Activated naive CD4-positive, alpha-beta T cell treated with anti-CD3 and anti-CD28 coated beads for 36 hours (primary cell): ENCODE measurements at regions of chr3 and their contacts with region 1.

Region 1: DNA sequence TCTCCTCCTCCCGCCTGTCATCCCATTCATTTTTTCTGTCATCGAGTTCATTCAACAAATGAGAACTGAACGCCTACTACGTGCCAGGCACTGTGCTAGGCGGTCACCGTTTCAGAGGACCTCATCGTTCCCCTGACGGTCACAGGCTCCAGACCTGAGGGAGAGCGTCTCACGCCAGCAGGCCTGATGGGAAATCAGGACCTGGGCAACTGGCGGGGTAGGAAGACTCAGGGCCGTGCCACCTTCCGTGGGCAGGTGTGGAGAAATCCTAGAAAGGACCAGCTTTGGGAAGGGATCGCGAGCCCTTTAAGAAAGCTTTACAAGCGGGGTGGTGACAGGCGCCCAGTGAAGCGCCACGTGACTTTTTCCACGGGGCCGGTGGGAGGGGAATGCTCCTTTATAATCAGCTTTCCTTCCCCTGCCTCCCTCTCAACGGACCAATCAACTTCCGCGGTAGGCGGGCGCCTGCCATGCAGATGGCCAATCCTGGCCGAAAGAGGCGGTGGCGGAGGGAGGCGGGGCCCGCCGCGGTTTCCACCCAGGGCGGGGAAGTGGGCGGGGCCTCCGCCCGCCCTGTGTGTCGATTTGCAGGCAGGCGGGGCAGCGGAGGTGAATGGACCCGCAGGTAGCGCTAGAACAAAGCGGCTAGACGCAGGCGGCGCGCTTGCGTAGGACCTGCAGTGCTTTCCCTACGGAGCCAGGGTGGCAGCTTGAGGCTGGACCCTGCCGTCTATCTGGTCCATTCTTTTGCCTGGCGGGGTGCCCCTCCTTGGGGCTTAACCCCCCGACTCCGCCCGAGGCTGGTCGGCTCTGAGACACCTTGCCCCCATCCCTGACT is 816 bp upstream of the DUSP7 start:
- DNase-seq: peak; percentile 100
- H3K4me3 Mint-ChIP-seq: peak overlapping the region; percentile 78
- H3K27ac Mint-ChIP-seq: peak overlapping the region; percentile 76
- H3K4me1 Mint-ChIP-seq: peaks cover 25% of the 10 kb centered on the region
- H3K27me3 Mint-ChIP-seq: no peaks in the 10 kb centered on the region

Region 2: GRCh38 chr3:51384726-51385473 is 672.3 kb before region 1 on chr3 and contains the start of gene MANF:
- CTCF ChIA-PET with region 1: no interaction called
- intact Hi-C with region 1: loop called (anchors 2 kb)
- DNase-seq: peak; percentile 99
- H3K4me3 Mint-ChIP-seq: peak within 1 kb of the TSS; percentile 97
- H3K27ac Mint-ChIP-seq: peak within 1 kb of the TSS; percentile 98
- H3K4me1 Mint-ChIP-seq: peaks cover 47% of the 10 kb centered on the region
- H3K27me3 Mint-ChIP-seq: no peaks in the 10 kb centered on the region
- total RNA-seq, gene MANF: 91.7 to 108 TPM

Region 3: DNA sequence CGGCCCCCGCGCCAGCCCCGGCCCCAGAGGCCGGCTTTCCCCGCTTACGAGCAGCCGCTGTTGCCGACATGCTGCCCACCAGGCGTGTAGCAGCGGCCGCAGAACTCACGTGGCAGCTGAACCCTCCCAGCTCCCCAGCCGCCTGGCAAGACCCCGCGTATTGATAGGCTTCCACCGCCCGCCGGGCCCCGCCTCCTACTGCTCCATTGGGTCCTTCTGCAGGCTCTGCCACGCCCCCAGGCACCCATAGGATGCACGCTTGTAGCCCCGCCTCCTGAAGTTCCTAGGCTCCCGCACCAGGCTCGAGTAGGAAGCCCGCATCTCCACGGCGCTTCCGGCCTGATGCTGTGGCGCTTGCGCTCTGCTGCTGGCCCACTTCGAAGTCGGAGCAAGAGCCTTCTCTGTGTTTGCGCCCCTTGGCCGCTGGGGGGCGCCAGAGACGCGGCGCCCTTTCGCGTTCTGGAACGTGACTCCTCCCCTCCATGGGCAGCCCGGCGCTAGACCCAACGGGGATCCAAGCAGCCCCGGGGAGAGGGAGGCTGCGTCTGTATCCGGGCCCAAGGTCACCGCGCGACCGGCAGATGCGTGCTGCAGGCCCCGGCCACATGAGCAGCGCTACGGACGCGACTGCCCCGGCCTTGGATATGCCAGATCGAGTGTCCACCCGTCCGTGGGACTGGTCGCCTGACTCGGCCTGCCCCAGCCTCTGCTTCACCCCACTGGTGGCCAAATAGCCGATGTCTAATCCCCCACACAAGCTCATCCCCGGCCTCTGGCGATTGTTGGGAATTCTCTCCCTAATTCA is 115.2 kb before region 1 on chr3 and contains the starts of genes PARP3 and RRP9:
- CTCF ChIA-PET with region 1: interaction called, 6 read pairs
- intact Hi-C with region 1: loop called (anchors 1 kb)
- DNase-seq: peak; percentile 100
- H3K4me3 Mint-ChIP-seq: peak within 1 kb of the TSS; percentile 88
- H3K27ac Mint-ChIP-seq: peak within 1 kb of the TSS; percentile 82
- H3K4me1 Mint-ChIP-seq: peaks cover 33% of the 10 kb centered on the region
- H3K27me3 Mint-ChIP-seq: no peaks in the 10 kb centered on the region
- total RNA-seq, gene PARP3: 10.0 to 11.1 TPM
- total RNA-seq, gene RRP9: 24.6 to 25.0 TPM

Region 4: DNA sequence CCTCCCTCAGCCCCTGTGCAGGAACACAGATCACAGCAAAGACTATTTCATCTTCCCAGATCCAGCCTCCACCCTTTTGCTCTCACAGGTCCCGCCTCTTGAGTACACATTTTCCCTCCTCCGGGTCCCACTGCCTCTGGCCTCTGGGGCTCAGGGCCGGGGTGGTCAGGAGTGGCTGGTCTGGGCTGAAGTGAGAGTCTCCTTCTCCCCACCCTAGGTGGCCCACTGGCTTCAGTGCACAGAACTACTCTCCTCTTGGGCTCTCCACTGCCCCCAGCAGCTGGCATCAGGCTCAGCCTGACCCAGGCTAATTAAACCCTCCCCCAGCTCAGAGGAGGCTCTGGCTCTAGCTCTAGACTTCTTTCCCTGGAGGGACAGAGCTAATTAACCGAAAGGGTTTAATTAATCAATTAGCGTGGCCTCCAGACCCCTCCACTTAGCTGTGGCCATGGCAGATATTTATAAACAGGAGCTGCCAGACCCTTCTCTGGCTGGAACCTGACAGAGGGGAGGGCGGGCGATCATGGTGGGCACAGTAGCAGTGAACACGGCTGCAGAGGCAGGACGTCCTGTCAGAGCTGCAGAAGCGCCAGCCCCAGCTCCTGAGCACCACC is 16.0 kb before region 1 on chr3:
- CTCF ChIA-PET with region 1: interaction called, 10 read pairs
- intact Hi-C with region 1: no loop called
- DNase-seq: no peak
- H3K4me3 Mint-ChIP-seq: no peak overlapping the region
- H3K27ac Mint-ChIP-seq: no peak overlapping the region
- H3K4me1 Mint-ChIP-seq: peaks cover 11% of the 10 kb centered on the region
- H3K27me3 Mint-ChIP-seq: no peaks in the 10 kb centered on the region

Region 5: GRCh38 chr3:52154117-52155094 is 97.2 kb after region 1 on chr3 and contains the start of gene POC1A:
- CTCF ChIA-PET with region 1: interaction called, 13 read pairs
- intact Hi-C with region 1: loop called (anchors 1 kb)
- DNase-seq: peak; percentile 96
- H3K4me3 Mint-ChIP-seq: peak within 1 kb of the TSS; percentile 91
- H3K27ac Mint-ChIP-seq: peak within 1 kb of the TSS; percentile 92
- H3K4me1 Mint-ChIP-seq: peaks cover 18% of the 10 kb centered on the region
- H3K27me3 Mint-ChIP-seq: no peaks in the 10 kb centered on the region
- total RNA-seq, gene POC1A: 32.3 to 32.7 TPM

Region 6: DNA sequence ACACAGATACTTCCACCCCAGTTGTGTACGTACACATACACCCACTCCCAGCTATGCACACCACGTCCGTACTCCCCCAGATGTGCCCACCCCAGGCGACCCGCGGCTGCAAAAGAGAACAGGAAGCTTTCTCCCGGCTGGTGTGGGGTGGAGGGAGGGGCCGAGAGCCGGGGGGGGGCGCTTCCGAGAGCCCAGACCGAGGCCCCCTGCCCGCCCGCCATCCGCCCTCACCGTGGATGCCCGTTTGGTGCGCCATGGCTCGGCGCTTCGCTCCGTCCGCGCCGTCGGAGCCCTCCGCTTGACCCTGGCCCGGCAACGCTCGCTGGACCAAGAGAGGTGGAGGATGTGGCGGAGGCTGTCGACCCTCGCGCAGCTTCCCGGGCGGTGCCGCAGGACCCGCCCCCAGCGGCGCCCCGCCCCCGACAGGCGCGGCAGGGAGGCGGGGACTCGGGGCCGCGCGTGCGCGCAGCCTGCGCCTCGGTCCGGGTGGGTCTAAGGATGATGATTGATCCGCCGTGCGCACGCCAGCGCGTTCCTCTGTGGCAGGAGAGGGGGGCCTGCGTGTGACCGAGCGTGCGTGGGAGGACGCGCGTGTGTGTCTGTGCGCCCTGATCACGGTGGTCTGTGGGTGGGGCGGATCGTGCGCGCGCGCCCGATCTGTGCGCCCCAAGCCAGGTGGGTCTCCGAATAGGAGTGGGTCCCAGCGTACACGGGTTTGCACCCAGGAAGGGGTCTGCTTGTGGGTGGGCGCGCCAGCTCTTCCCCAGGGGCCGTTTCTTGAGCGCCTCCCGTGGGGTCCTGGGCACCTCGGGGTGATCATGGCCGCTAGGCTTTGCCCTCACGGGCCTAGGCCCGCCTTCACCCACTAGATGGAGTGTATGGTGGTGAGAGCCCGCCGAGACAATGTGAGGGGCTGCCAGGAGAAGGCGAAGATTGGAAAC is 181.8 kb after region 1 on chr3 and contains the start of gene TWF2:
- CTCF ChIA-PET with region 1: interaction called, 4 read pairs
- intact Hi-C with region 1: loop called (anchors 5 kb)
- DNase-seq: peak; percentile 83
- H3K4me3 Mint-ChIP-seq: peak within 1 kb of the TSS; percentile 92
- H3K27ac Mint-ChIP-seq: peak within 1 kb of the TSS; percentile 98
- H3K4me1 Mint-ChIP-seq: peaks cover 75% of the 10 kb centered on the region
- H3K27me3 Mint-ChIP-seq: no peaks in the 10 kb centered on the region
- total RNA-seq, gene TWF2: 89.1 to 91.3 TPM

Region 7: DNA sequence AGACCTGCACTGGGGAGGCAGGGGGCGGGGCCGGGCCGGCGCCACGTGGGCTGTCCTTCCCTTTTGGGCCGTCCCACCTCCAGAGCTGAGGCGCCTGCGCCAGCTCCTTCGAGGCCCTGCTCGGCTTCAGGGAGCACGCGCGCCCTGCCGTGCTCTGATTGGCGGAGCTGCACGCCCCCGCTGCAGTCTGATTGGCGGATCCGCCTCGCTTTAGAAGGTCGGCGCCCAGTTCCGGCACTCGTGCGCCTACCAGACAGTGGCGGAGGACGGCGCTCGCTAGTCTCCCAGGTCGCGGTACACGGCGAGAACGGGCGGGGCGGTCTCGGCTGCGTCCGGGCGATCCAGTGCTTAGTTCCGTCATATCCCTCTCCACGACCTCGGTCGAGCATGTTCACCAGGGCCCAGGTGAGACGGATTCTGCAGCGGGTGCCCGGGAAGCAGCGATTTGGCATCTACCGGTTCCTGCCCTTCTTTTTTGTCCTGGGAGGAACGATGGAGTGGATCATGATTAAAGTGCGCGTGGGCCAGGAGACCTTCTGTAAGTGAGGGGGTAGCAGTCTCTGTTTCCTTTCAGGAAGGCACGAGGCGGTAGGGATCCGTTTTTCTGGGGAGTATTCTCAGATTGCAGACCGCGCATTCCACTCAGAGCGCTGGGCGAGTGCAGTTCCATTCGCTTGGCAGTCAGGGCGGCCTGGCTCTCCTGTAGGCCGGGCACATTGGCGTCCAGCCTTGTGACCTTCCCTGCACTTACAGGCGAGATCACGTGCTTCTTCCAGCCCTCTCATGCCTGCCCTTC is 479.4 kb after region 1 on chr3 and contains the start of gene UQCC5:
- CTCF ChIA-PET with region 1: no interaction called
- intact Hi-C with region 1: loop called (anchors 2 kb)
- DNase-seq: peak; percentile 98
- H3K4me3 Mint-ChIP-seq: peak within 1 kb of the TSS; percentile 91
- H3K27ac Mint-ChIP-seq: peak within 1 kb of the TSS; percentile 87
- H3K4me1 Mint-ChIP-seq: peaks cover 49% of the 10 kb centered on the region
- H3K27me3 Mint-ChIP-seq: no peaks in the 10 kb centered on the region
- total RNA-seq, gene UQCC5: 12.3 to 13.1 TPM